AG04449 (cell line): ENCODE measurements at regions of chr10 and their contacts with region 1.

Region 1: GRCh38 chr10:126302826-126303665 is 85.2 kb downstream of the ADAM12 start:
- DNase-seq: no peak
- H3K4me3 ChIP-seq: no peak overlapping the region
- CTCF ChIP-seq: peak; percentile 3

Region 2: GRCh38 chr10:126171553-126171952 is 131.5 kb before region 1 on chr10:
- CTCF ChIA-PET with region 1: no interaction called
- POLR2A ChIA-PET with region 1: no interaction called
- DNase-seq: peak; percentile 96
- H3K4me3 ChIP-seq: peak overlapping the region; percentile 23
- CTCF ChIP-seq: no peak

Region 3: GRCh38 chr10:126285612-126286011 is 17.4 kb before region 1 on chr10:
- CTCF ChIA-PET with region 1: interaction called, 12 read pairs
- POLR2A ChIA-PET with region 1: no interaction called
- DNase-seq: no peak
- H3K4me3 ChIP-seq: no peak overlapping the region
- CTCF ChIP-seq: no peak

Region 4: DNA sequence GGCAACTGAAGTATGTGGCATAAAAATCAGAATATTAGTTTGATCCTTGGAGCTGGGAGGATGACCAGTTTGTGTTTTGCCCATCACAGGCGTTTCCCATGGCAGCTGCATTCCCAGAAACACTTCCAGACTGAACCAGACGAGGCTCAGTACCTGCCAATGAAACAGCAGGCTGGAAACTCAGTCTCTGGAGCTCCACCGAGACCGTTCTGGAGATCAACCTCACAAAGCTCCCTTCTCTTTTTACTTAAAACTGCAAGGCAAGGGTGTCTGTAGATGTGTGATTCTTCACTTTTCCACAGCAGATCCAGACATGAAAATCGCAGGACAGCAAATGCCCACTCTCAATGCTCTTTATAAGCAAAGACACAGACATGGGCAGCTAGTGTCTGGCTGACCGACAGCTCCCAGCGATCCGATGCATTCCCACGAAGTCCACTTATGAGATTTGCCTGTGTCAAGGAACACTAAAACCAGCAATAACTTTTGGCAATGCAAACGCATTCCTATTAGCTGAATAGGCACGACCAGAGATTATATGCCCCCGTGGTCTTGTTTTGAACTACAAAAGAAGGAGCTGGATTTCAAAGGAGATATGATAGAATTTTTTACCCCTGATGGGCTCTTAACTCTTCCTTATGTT is 12.6 kb after region 1 on chr10:
- CTCF ChIA-PET with region 1: interaction called, 14 read pairs
- POLR2A ChIA-PET with region 1: no interaction called
- DNase-seq: peak; percentile 9
- H3K4me3 ChIP-seq: no peak overlapping the region
- CTCF ChIP-seq: no peak